ENCODE measurements at regions of chr12 and their contacts with region 1.

Region 1: GRCh38 chr12:69570545-69571399 is 14.5 kb upstream of the CCT2 start:
- DNase-seq: peak; percentile 68
- H3K4me3 ChIP-seq: no peak overlapping the region
- H3K27ac ChIP-seq: no peak overlapping the region
- H3K4me1 ChIP-seq: no peaks in the 10 kb centered on the region
- H3K27me3 ChIP-seq: no peaks in the 10 kb centered on the region
- CTCF ChIP-seq: peak; percentile 47 to 77 (median 68)
- EP300 ChIP-seq: no peak
- POLR2A ChIP-seq: no peak

Region 2: DNA sequence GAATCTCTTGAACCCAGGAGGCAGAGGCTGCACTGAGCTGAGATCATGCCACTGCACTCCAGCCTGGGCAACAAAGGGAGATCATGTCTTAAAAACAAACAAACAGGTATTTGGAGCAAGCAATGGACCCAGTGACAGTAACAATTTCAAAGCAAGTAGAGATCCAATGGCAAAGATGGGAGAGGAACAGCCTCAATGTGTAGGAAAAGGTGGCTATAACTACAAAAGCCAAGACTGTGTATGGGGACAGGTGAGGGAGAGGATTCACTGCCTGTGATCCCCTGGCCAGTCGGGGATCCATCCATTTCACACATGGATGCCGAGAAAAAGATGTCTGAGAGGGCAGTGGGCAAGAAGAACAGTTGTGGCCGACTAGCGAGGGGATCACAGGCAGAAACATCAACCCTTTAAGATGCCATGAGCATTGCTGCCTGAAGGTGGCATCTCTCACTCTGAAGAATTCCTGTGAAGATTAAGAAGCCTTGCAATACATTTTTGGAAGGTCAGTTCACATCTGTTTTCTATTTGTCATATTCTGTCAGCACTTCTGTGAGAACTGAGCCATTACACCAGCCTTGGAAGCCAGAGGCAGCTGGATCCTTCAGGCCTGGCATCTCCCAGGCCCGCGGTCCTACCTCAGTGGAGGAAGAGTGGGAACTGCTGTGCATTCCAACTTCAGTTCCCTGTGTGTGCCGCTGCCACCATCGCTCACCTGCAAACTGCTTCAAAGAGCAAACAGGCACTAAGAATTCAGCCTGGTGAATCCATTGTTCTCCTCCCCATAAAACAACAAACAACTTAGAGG is 155.1 kb before region 1 on chr12:
- intact Hi-C with region 1: loop called (anchors 2 kb)
- DNase-seq: peak; percentile 70
- H3K4me3 ChIP-seq: no peak overlapping the region
- H3K27ac ChIP-seq: peak overlapping the region in 2 of 4 donors; percentile 20 to 34
- H3K4me1 ChIP-seq: peaks cover 0 to 10% (median 6%) of the 10 kb centered on the region in 4 donors
- H3K27me3 ChIP-seq: no peaks in the 10 kb centered on the region
- CTCF ChIP-seq: peak; percentile 65 to 84 (median 74)
- EP300 ChIP-seq: no peak
- POLR2A ChIP-seq: no peak

Region 3: GRCh38 chr12:69442894-69443293 is 127.9 kb before region 1 on chr12:
- intact Hi-C with region 1: no loop called
- DNase-seq: no peak
- H3K4me3 ChIP-seq: no peak overlapping the region
- H3K27ac ChIP-seq: no peak overlapping the region
- H3K4me1 ChIP-seq: no peaks in the 10 kb centered on the region
- H3K27me3 ChIP-seq: no peaks in the 10 kb centered on the region
- CTCF ChIP-seq: no peak
- EP300 ChIP-seq: no peak
- POLR2A ChIP-seq: no peak